Esophagus muscularis mucosa (tissue), 4 donors: ENCODE measurements at regions of chr15 and their contacts with region 1.

Region 1: DNA sequence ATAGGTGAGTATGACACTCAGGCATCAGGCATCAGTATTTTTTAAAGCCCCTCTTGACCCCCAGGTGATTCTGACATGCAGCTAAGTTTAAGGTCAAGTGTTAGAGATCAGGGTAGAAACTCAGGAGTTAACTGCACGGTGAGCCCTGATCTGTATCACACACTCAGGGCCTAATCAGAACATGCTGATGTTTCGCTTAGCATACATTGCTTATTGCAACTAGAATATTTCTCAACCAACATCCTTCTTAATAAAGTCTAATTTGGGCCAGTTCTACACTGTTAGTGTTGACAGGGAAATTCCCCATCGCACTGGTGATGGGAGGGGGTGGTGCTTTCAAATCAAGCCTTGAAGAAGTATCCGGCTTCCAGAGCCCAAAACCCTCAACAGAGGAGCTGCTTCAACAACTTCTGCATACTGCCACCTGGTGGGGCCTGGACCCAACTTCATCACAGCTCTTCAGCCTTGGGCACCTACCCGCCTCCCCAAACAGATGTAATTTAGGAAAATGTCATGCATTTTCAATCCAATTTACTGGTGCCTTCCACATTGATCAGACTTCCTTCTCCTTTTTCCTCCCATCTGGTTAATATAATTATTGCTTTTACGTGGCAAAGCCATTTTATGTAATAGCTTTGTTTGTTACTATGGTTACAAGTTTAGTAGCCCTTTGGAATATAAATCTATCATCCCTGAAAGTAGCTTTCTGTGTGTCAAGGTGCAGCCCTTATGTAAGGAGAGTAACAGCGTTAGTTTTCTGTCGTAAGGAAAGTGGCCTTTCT is 312.2 kb downstream of the RORA start:
- DNase-seq: peak; percentile 97
- H3K4me3 ChIP-seq: peak overlapping the region; percentile 8 to 35 (median 26)
- H3K27ac ChIP-seq: peak overlapping the region; percentile 73 to 83 (median 79)
- H3K4me1 ChIP-seq: peaks cover 24 to 56% (median 49%) of the 10 kb centered on the region in 4 donors
- H3K27me3 ChIP-seq: no peaks in the 10 kb centered on the region
- CTCF ChIP-seq: peak; percentile 84 to 89 (median 85)
- EP300 ChIP-seq: no peak
- POLR2A ChIP-seq: no peak

Region 2: GRCh38 chr15:60507596-60508424 is 409.1 kb before region 1 on chr15:
- intact Hi-C with region 1: loop called (anchors 5 kb)
- DNase-seq: no peak
- H3K4me3 ChIP-seq: no peak overlapping the region
- H3K27ac ChIP-seq: peak overlapping the region in 1 of 4 donors; percentile 10
- H3K4me1 ChIP-seq: peaks cover 11 to 15% (median 13%) of the 10 kb centered on the region in 4 donors
- H3K27me3 ChIP-seq: no peaks in the 10 kb centered on the region
- CTCF ChIP-seq: peak; percentile 92 to 94 (median 92)
- EP300 ChIP-seq: no peak
- POLR2A ChIP-seq: no peak

Region 3: DNA sequence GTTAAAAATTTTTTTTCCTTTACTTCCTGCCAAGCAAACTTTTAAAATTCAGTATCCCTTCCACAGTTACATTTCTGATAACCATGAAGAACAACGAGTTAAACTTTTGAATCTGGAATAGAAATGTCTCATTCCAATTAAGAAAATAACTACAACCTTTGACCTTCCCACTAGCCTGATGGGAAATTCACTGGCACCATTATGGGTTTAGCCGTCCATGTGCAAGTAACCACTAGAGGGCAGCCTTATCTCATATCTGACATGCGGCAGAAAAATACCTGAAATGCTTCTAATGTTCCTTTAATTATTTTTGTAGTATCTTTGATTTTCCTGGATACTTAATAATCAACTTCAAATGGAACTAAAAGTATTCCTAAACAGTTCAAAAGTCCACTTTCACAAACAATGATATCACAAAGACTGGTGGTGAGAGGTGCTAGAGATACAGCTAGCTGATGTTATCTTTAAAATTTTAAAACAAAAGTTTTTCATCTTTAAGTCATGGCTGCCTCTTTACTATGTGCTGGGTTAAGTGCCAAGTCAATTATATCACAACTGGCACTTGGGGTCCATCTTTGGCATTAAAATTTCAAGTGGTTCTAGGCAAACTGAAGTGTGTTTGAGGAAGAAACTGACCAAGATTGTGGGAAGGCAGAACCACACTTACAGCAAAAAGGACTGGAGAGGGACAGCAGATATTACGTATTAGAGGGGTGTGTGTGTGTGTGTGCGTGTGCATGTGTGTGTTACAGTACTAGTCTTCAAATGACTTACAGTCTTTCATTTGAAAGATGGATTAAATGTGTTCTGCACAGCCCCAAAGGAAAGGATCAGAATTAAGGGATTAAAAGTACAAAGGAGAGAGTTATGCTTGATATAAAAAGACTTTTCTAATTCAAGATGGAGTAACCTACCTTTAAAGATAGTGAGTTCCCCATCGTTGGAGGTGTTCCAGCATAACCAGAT is 330.8 kb before region 1 on chr15:
- intact Hi-C with region 1: loop called (anchors 2 kb)
- DNase-seq: no peak
- H3K4me3 ChIP-seq: no peak overlapping the region
- H3K27ac ChIP-seq: peak overlapping the region; percentile 1 to 34 (median 7)
- H3K4me1 ChIP-seq: peaks cover 32 to 82% (median 64%) of the 10 kb centered on the region in 4 donors
- H3K27me3 ChIP-seq: no peaks in the 10 kb centered on the region
- CTCF ChIP-seq: peak; percentile 89 to 92 (median 89)
- EP300 ChIP-seq: no peak
- POLR2A ChIP-seq: no peak

Region 4: GRCh38 chr15:60660290-60661051 is 256.4 kb before region 1 on chr15:
- intact Hi-C with region 1: loop called (anchors 10 kb)
- DNase-seq: no peak
- H3K4me3 ChIP-seq: peak overlapping the region in 1 of 4 donors; percentile 26
- H3K27ac ChIP-seq: peak overlapping the region; percentile 53 to 65 (median 58)
- H3K4me1 ChIP-seq: peaks cover 7 to 17% (median 15%) of the 10 kb centered on the region in 4 donors
- H3K27me3 ChIP-seq: no peaks in the 10 kb centered on the region
- CTCF ChIP-seq: no peak
- EP300 ChIP-seq: no peak
- POLR2A ChIP-seq: no peak

Region 5: GRCh38 chr15:60682615-60683014 is 234.3 kb before region 1 on chr15:
- intact Hi-C with region 1: no loop called
- DNase-seq: no peak
- H3K4me3 ChIP-seq: no peak overlapping the region
- H3K27ac ChIP-seq: no peak overlapping the region
- H3K4me1 ChIP-seq: peaks cover 0 to 22% (median 17%) of the 10 kb centered on the region in 4 donors
- H3K27me3 ChIP-seq: no peaks in the 10 kb centered on the region
- CTCF ChIP-seq: no peak
- EP300 ChIP-seq: no peak
- POLR2A ChIP-seq: no peak

Region 6: GRCh38 chr15:61051569-61052031 is 134.7 kb after region 1 on chr15:
- intact Hi-C with region 1: loop called (anchors 5 kb)
- DNase-seq: peak; percentile 91
- H3K4me3 ChIP-seq: no peak overlapping the region
- H3K27ac ChIP-seq: peak overlapping the region; percentile 54 to 71 (median 64)
- H3K4me1 ChIP-seq: peaks cover 0 to 26% (median 19%) of the 10 kb centered on the region in 4 donors
- H3K27me3 ChIP-seq: no peaks in the 10 kb centered on the region
- CTCF ChIP-seq: peak; percentile 71 to 84 (median 81)
- EP300 ChIP-seq: no peak
- POLR2A ChIP-seq: no peak